A549 (cell line): ENCODE measurements at regions of chr7 and their contacts with region 1.

Region 1: GRCh38 chr7:142587578-142588191 is 161.6 kb upstream of the PRSS1 start:
- DNase-seq: peak; percentile 85 to 88
- ATAC-seq: peak; percentile 92 to 97
- H3K4me3 ChIP-seq: no peak overlapping the region
- H3K27ac ChIP-seq: peak overlapping the region; percentile 29 to 69; a peak in 4 of 6 replicates
- H3K4me1 ChIP-seq: peaks cover 24% of the 10 kb centered on the region
- CTCF ChIP-seq: peak; percentile 86
- EP300 ChIP-seq: no peak
- POLR2A ChIP-seq: no peak
- RAD21 ChIP-seq: peak; percentile 46 to 50; a peak in 4 of 5 replicates

Region 2: GRCh38 chr7:142357953-142358520 is 229.6 kb before region 1 on chr7:
- CTCF ChIA-PET with region 1: no interaction called
- POLR2A ChIA-PET with region 1: no interaction called
- DNase-seq: peak; percentile 15 to 76
- ATAC-seq: peak; percentile 77 to 96
- H3K4me3 ChIP-seq: no peak overlapping the region
- H3K27ac ChIP-seq: no peak overlapping the region
- H3K4me1 ChIP-seq: no peaks in the 10 kb centered on the region
- CTCF ChIP-seq: peak; percentile 66
- EP300 ChIP-seq: no peak
- POLR2A ChIP-seq: no peak
- RAD21 ChIP-seq: peak; percentile 47 to 48

Region 3: GRCh38 chr7:142516038-142516501 is 71.6 kb before region 1 on chr7:
- CTCF ChIA-PET with region 1: interaction called, 11 read pairs
- POLR2A ChIA-PET with region 1: no interaction called
- DNase-seq: peak; percentile 38 to 71
- ATAC-seq: peak; percentile 75 to 94
- H3K4me3 ChIP-seq: no peak overlapping the region
- H3K27ac ChIP-seq: no peak overlapping the region
- H3K4me1 ChIP-seq: no peaks in the 10 kb centered on the region
- CTCF ChIP-seq: peak; percentile 64
- EP300 ChIP-seq: no peak
- POLR2A ChIP-seq: no peak
- RAD21 ChIP-seq: peak; percentile 51 to 66

Region 4: DNA sequence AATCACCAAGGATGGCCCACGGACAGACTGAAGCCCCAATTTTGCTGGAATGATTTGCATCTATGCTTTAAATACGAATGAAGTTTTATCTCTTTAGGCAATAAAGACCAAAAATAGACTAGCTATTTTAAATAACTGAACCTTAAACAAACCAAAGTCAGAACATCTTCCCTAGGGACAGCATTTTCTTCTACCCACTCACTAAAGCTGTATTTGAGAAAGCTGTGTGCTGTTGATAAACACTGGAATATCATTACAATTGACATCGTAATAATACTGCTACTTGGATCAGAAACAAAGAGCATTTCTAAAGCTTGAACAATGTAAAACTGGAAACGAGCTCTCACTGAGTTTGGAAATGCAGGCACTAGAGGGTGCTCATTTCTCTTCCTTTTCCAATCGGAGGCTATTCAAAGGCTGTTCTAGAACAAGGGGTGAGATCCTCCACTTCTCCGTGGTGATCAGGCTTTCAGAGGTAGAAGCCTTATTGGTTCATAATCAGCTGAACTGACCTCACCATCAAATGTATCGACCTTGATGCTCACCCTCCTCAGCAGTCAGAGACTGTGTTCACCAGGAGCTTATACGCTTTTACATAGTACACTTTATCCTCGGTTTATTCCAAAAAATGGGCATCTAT is 63.7 kb before region 1 on chr7:
- CTCF ChIA-PET with region 1: interaction called, 10 read pairs
- POLR2A ChIA-PET with region 1: no interaction called
- DNase-seq: no peak
- ATAC-seq: peak in 1 of 2 experiments; percentile 47; a peak in 2 of 6 replicates
- H3K4me3 ChIP-seq: no peak overlapping the region
- H3K27ac ChIP-seq: no peak overlapping the region
- H3K4me1 ChIP-seq: no peaks in the 10 kb centered on the region
- CTCF ChIP-seq: no peak; the same call in 2 of the 3 replicates
- EP300 ChIP-seq: no peak
- POLR2A ChIP-seq: no peak
- RAD21 ChIP-seq: no peak

Region 5: DNA sequence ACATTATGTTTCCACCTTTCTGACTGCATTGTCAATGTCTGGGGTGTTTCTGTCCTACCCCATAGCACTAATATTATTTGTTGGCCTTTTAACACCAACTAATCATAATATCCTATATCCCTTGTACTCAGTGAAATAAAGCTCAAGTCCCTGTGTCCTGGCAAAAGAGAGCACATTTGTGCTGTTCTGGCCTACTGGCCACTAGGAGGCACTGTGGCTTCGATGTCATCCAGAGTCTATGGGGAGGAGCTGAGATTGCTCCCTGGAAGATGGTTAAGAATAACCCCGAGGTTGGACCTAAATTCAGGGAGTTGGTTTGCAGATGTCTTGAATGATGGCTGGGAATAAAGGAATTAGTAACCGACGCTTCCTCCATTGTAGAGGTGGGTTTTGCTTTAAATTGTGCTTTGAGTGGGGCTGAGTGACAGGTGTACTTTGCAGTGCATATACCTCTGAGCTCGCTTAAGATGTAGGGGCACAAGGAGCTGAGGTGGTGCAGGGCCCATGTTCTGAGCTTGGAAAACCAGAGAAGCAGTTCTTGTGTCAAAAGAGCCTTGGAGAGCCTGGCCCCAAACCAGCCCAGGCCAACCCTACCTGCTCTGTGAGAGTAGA is 29.6 kb before region 1 on chr7:
- CTCF ChIA-PET with region 1: interaction called, 14 read pairs
- POLR2A ChIA-PET with region 1: no interaction called
- DNase-seq: peak; percentile 35 to 72
- ATAC-seq: peak; percentile 26 to 77; a peak in 3 of 6 replicates
- H3K4me3 ChIP-seq: no peak overlapping the region
- H3K27ac ChIP-seq: peak overlapping the region; percentile 66 to 83
- H3K4me1 ChIP-seq: peaks cover 24% of the 10 kb centered on the region
- CTCF ChIP-seq: peak; percentile 47
- EP300 ChIP-seq: no peak
- POLR2A ChIP-seq: no peak
- RAD21 ChIP-seq: peak in 1 of 2 experiments; percentile 38; a peak in 2 of 5 replicates

Region 6: DNA sequence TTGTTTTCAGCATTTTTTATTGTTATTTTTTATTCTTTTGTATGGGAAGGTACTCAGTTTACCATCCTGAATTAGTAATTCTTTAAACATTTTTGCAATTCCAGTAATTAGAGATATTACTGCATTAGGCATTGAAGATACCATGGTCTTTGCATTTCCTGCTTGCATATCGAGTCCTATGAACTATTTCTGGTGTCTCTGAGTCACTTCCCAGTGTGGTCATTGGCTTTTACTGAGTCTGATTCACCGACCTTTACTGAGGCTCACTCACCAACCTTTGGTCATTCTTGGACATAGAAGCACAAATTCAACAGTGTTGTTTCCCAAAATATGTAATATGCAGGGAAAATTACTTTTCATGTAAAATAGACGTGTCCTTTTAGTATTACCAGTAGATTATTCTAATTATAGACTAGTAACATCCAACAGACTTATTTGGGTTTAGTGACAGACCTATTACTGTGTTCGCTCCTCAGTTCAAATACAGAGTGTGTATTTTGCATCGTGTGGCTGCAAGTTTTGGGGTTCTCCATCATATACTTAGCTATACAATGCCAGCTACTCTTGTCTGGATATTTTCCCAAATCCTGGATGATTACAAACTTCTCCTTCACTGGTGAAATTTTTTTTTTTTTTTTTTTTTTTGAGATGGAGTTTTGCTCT is 19.1 kb before region 1 on chr7:
- CTCF ChIA-PET with region 1: interaction called, 12 read pairs
- POLR2A ChIA-PET with region 1: no interaction called
- DNase-seq: peak; percentile 38 to 72
- ATAC-seq: peak; percentile 94 to 97
- H3K4me3 ChIP-seq: no peak overlapping the region
- H3K27ac ChIP-seq: peak overlapping the region; percentile 2 to 54; a peak in 3 of 6 replicates
- H3K4me1 ChIP-seq: peaks cover 16% of the 10 kb centered on the region
- CTCF ChIP-seq: no peak
- EP300 ChIP-seq: no peak
- POLR2A ChIP-seq: no peak
- RAD21 ChIP-seq: no peak

Region 7: DNA sequence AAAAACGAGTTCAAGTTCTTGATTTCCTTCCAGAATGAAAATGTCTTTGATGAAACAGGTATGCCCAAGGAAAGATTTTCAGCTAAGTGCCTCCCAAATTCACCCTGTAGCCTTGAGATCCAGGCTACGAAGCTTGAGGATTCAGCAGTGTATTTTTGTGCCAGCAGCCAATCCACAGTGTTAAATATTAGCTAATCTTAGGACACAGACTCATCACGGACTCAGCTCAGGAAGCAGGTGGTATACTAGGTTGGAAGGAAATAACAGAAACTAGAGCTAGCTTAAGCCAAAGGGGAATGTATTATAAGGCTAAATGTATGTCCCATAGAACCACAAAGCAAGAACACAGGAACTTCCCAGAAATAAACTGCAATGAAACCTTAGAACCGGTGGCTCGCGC is 10.6 kb after region 1 on chr7:
- CTCF ChIA-PET with region 1: interaction called, 26 read pairs
- POLR2A ChIA-PET with region 1: no interaction called
- DNase-seq: no peak
- ATAC-seq: no peak
- H3K4me3 ChIP-seq: no peak overlapping the region
- H3K27ac ChIP-seq: no peak overlapping the region
- H3K4me1 ChIP-seq: no peaks in the 10 kb centered on the region
- CTCF ChIP-seq: no peak
- EP300 ChIP-seq: no peak
- POLR2A ChIP-seq: no peak
- RAD21 ChIP-seq: no peak

Region 8: DNA sequence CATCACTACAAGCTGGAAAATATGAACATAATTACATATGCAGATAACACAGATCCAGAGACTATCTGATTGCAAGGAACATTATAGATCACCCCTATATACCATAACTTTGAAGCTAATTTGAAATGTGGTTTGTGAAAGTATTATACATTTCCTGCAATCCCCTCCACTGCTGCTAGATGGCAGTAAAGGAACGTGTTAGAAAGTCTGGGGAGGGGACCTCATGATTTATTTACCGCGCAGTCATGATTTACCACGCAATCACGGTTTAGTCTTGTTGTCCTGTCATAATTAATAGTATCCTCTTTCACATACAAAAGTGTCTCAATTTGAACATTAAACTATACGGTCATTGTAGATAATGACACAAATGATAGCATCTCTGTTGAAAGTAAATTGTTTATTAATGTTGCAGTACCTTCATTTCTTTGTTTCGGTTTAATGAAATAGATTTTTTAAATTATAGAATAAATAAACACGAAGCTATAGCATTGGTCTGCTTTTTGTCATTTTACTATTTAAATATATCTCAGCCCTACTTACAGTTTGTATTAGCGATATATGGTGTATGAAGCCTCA is 16.3 kb after region 1 on chr7:
- CTCF ChIA-PET with region 1: interaction called, 16 read pairs
- POLR2A ChIA-PET with region 1: no interaction called
- DNase-seq: peak; percentile 57 to 66
- ATAC-seq: peak; percentile 43 to 65; a peak in 5 of 6 replicates
- H3K4me3 ChIP-seq: no peak overlapping the region; the same call in 2 of the 3 replicates
- H3K27ac ChIP-seq: no peak overlapping the region
- H3K4me1 ChIP-seq: no peaks in the 10 kb centered on the region
- CTCF ChIP-seq: peak; percentile 86
- EP300 ChIP-seq: no peak
- POLR2A ChIP-seq: no peak
- RAD21 ChIP-seq: peak; percentile 79 to 80